Activated CD8-positive, alpha-beta T cell treated with anti-CD3 and anti-CD28 coated beads for 36 hours (primary cell): ENCODE measurements at regions of chr15 and their contacts with region 1.

Region 1: GRCh38 chr15:41774062-41774881 is at the start of gene MAPKBP1:
- DNase-seq: peak; percentile 99
- ATAC-seq: peak; percentile 92
- H3K4me3 Mint-ChIP-seq: peak within 1 kb of the TSS; percentile 91
- H3K27ac Mint-ChIP-seq: peak within 1 kb of the TSS; percentile 92
- H3K4me1 Mint-ChIP-seq: peaks cover 56% of the 10 kb centered on the region
- H3K27me3 Mint-ChIP-seq: no peaks in the 10 kb centered on the region
- CTCF ChIP-seq: peak; percentile 59
- total RNA-seq, gene MAPKBP1: 16.6 to 17.2 TPM

Region 2: GRCh38 chr15:41564286-41564959 is 209.8 kb before region 1 on chr15:
- CTCF ChIA-PET with region 1: no interaction called
- POLR2A ChIA-PET with region 1: no interaction called
- intact Hi-C with region 1: no loop called
- DNase-seq: no peak
- ATAC-seq: no peak
- H3K4me3 Mint-ChIP-seq: no peak overlapping the region
- H3K27ac Mint-ChIP-seq: no peak overlapping the region
- H3K4me1 Mint-ChIP-seq: peaks cover 3% of the 10 kb centered on the region
- H3K27me3 Mint-ChIP-seq: peaks cover 14% of the 10 kb centered on the region
- CTCF ChIP-seq: no peak

Region 3: DNA sequence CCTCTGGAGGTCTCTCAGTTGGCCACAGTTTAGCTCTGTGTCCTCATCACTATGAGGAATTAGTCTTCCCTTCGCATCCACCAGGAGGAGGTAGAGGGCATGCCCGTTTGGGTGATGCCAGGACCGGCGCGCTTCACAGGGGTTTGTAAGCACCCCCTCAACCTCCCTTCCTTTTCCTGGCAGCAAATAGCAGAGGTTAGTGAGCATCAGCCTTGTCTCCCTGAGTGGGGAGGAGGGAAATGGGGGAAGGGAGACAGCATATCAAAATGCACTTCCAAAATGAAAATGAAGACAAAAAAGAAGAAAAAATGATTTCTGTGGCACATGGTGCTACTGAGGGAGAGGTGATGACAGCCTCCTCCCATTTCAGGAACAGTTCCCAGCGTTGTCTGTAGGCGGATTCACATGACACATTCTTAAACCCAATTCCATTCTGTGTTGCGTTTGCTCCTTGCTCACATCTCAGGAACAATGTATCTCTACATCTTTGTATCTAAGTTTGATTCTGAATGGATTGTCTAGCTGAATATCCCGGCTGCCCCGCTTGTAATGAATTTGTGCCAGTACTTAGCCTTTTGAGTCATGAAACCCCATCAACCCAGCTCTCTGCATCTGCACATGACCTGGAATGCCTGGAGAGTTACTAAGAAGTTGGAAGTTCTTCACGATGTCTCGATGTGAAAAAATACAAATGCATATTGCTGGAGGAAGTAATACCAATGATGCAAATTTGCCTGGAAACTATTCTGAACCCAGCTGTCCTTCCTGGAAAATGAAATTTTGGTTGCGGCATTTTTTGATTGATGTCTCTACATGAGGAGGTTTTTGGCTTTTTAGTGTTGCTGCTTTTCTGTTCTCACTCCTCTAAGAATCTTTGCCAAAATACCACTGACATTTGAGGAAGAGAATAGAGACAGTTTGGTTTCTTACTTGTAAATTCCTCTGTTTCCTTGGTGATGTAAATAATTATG is 170.0 kb before region 1 on chr15:
- CTCF ChIA-PET with region 1: interaction called, 10 read pairs
- POLR2A ChIA-PET with region 1: no interaction called
- intact Hi-C with region 1: no loop called
- DNase-seq: peak; percentile 69
- ATAC-seq: peak; percentile 97
- H3K4me3 Mint-ChIP-seq: peak overlapping the region; percentile 48
- H3K27ac Mint-ChIP-seq: no peak overlapping the region
- H3K4me1 Mint-ChIP-seq: peaks cover 10% of the 10 kb centered on the region
- H3K27me3 Mint-ChIP-seq: peaks cover 7% of the 10 kb centered on the region
- CTCF ChIP-seq: peak; percentile 79

Region 4: GRCh38 chr15:41790756-41791546 is 16.7 kb after region 1 on chr15:
- CTCF ChIA-PET with region 1: interaction called, 44 read pairs
- POLR2A ChIA-PET with region 1: interaction called, 6 read pairs
- intact Hi-C with region 1: no loop called
- DNase-seq: no peak
- ATAC-seq: peak; percentile 62
- H3K4me3 Mint-ChIP-seq: no peak overlapping the region
- H3K27ac Mint-ChIP-seq: peak overlapping the region; percentile 64
- H3K4me1 Mint-ChIP-seq: peaks cover 40% of the 10 kb centered on the region
- H3K27me3 Mint-ChIP-seq: no peaks in the 10 kb centered on the region
- CTCF ChIP-seq: no peak

Region 5: DNA sequence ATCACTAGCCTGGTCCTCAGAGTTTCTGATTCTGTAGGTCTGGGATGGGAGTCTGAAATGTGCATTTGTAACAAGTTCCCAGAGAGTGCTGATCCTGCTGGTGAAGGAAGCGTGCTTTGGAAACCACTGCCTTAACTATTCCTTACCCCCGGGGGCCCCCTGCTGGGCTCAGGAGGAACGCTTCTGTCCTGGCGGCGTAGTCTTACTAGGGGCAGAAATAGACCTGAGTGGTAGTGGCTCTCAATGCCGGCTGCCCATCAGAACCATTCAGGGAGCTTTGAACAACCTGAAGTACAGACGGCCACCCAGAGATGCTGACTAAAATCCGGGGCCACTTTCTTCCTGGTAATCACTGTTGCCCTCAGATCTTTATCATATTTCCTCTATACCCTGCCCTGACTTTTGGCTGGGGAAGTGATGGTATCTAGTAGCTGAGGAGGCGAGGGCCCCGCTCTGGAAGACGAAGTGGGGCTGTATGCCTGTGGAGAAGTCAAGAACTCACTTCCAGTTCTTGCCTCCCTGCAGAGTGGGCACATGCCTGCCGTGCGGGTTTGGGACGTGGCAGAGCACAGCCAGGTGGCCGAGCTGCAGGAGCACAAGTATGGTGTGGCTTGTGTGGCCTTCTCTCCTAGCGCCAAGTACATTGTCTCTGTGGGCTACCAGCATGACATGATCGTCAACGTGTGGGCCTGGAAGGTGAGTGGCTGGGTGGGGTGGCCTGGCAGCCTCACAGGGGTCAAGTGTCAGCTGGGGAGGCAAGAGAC is 37.3 kb after region 1 on chr15:
- CTCF ChIA-PET with region 1: interaction called, 337 read pairs
- POLR2A ChIA-PET with region 1: interaction called, 29 read pairs
- intact Hi-C with region 1: loop called (anchors 1 kb)
- DNase-seq: peak; percentile 86
- ATAC-seq: peak; percentile 91
- H3K4me3 Mint-ChIP-seq: no peak overlapping the region
- H3K27ac Mint-ChIP-seq: no peak overlapping the region
- H3K4me1 Mint-ChIP-seq: peaks cover 18% of the 10 kb centered on the region
- H3K27me3 Mint-ChIP-seq: no peaks in the 10 kb centered on the region
- CTCF ChIP-seq: peak; percentile 92

Region 6: GRCh38 chr15:41904541-41905005 is 130.3 kb after region 1 on chr15:
- CTCF ChIA-PET with region 1: interaction called, 70 read pairs
- POLR2A ChIA-PET with region 1: no interaction called
- intact Hi-C with region 1: loop called (anchors 2 kb)
- DNase-seq: peak; percentile 83
- ATAC-seq: peak; percentile 95
- H3K4me3 Mint-ChIP-seq: no peak overlapping the region
- H3K27ac Mint-ChIP-seq: no peak overlapping the region
- H3K4me1 Mint-ChIP-seq: peaks cover 7% of the 10 kb centered on the region
- H3K27me3 Mint-ChIP-seq: no peaks in the 10 kb centered on the region
- CTCF ChIP-seq: peak; percentile 88